K562 (cell line): ENCODE measurements at regions of chr15 and their contacts with region 1.

Region 1: GRCh38 chr15:92683232-92683834 is 27.8 kb upstream of the FAM174B start:
- DNase-seq: peak in 3 of 4 experiments; percentile 27 to 45 (median 29)
- ATAC-seq: peak; percentile 85
- H3K4me3 ChIP-seq: no peak overlapping the region
- H3K27ac ChIP-seq: no peak overlapping the region
- H3K4me1 ChIP-seq: no peaks in the 10 kb centered on the region
- H3K27me3 ChIP-seq: peaks cover 15 to 24% of the 10 kb centered on the region in 2 experiments
- CTCF ChIP-seq: peak; percentile 70 to 76 (median 72)
- EP300 ChIP-seq: no peak
- POLR2A ChIP-seq: no peak
- RAD21 ChIP-seq: peak; percentile 73 to 75

Region 2: DNA sequence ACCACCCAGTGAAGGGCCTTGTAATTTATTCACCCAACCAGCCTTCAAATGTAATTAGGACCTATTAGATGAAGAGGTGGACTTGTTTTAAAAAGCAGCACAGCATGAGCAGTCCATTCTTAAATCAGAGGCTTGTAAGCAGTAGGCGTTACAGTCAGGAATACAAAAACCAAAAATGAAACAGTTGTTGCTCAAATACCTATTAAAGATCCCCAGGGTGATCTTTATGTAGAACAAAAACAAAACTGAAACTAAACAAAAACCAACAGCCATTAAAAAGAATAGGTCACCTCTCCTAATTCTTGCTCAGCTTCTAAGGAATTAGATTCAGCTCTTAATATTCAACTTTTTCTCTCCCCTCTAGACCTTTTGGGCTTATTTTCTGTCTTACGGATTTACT is 394.6 kb before region 1 on chr15:
- CTCF ChIA-PET with region 1: no interaction called
- POLR2A ChIA-PET with region 1: no interaction called
- in situ Hi-C with region 1: no loop called
- intact Hi-C with region 1: no loop called
- DNase-seq: no peak
- ATAC-seq: no peak
- H3K4me3 ChIP-seq: no peak overlapping the region
- H3K27ac ChIP-seq: no peak overlapping the region
- H3K4me1 ChIP-seq: no peaks in the 10 kb centered on the region
- H3K27me3 ChIP-seq: no peaks in the 10 kb centered on the region
- CTCF ChIP-seq: no peak
- EP300 ChIP-seq: no peak
- POLR2A ChIP-seq: no peak
- RAD21 ChIP-seq: no peak

Region 3: DNA sequence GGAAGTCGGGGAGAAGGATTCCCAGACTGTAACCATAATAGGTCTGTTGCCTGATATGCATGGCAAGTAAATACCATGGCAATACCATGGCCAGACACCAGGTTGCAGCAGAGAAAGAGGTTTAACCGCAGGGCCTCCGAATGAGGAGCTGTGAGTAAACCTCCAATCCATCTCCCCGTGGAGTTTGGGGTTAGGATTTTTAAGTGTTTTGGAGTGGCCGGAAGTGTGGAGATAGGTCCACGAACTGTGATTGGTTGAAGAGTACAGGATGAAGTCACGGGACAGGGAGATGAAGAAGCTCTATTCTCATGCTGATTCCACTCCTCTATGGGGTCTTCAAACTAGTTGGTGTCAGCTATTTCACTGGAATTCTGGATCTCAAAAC is 161.7 kb before region 1 on chr15:
- CTCF ChIA-PET with region 1: interaction called, 13 read pairs
- POLR2A ChIA-PET with region 1: no interaction called
- in situ Hi-C with region 1: no loop called
- intact Hi-C with region 1: loop called (anchors 1 kb)
- DNase-seq: peak; percentile 44 to 58 (median 54)
- ATAC-seq: peak; percentile 95
- H3K4me3 ChIP-seq: no peak overlapping the region
- H3K27ac ChIP-seq: no peak overlapping the region
- H3K4me1 ChIP-seq: no peaks in the 10 kb centered on the region
- H3K27me3 ChIP-seq: peaks cover 0 to 12% of the 10 kb centered on the region in 2 experiments; a peak in 2 of 5 replicates
- CTCF ChIP-seq: peak; percentile 72 to 81 (median 77)
- EP300 ChIP-seq: no peak
- POLR2A ChIP-seq: no peak
- RAD21 ChIP-seq: peak; percentile 69 to 75

Region 4: DNA sequence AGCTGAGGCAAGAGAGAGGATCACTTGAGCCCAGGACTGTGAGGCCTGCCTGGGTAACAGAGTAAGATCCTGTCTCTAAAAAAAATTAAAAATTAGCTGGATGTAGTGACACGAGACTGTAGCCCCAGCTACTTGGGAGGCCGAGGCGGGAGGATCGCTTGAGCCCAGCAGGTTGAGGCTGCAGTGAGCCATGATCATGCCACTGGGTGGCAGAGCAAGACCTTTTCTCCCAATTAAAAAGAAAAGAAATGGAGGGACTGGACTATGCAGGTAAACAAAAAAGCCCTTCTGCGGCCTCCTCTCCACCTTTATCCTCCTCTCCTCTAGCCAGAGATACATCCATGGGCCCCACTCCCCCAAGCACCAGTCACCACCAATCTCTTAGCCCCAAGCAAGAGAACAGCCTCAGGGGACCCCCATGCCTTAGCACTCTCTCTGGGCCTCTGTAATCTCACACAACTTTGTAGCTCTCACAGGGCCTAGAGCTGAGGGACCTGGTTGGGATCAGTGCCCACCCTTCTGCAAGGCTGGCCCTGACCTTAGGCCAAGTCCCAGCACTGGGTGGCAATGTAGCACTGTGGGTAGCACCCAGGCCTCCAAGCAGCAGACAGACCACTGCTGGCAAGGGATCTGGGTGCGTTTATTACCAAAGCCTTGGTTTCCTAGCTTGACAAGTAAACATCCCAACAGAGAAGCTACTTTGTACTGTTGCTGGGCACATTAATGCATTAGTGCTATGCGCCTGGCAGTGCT is 71.2 kb before region 1 on chr15:
- CTCF ChIA-PET with region 1: interaction called, 3 read pairs
- POLR2A ChIA-PET with region 1: interaction called, 3 read pairs
- in situ Hi-C with region 1: no loop called
- intact Hi-C with region 1: loop called (anchors 1 kb)
- DNase-seq: no peak
- ATAC-seq: peak; percentile 22; the same call in 2 of the 3 replicates
- H3K4me3 ChIP-seq: no peak overlapping the region
- H3K27ac ChIP-seq: no peak overlapping the region
- H3K4me1 ChIP-seq: peaks cover 6 to 15% of the 10 kb centered on the region in 2 experiments; a peak in 4 of 5 replicates
- H3K27me3 ChIP-seq: peaks cover 6 to 35% of the 10 kb centered on the region in 2 experiments
- CTCF ChIP-seq: peak in 1 of 3 experiments; percentile 18; a peak in 1 of 6 replicates
- EP300 ChIP-seq: no peak
- POLR2A ChIP-seq: no peak
- RAD21 ChIP-seq: peak in 1 of 2 experiments; percentile 31; a peak in 2 of 4 replicates

Region 5: GRCh38 chr15:92631721-92632120 is 51.6 kb before region 1 on chr15:
- CTCF ChIA-PET with region 1: interaction called, 8 read pairs
- POLR2A ChIA-PET with region 1: no interaction called
- in situ Hi-C with region 1: no loop called
- intact Hi-C with region 1: loop called (anchors 1 kb)
- DNase-seq: peak; percentile 25 to 45 (median 38)
- ATAC-seq: peak; percentile 90
- H3K4me3 ChIP-seq: no peak overlapping the region
- H3K27ac ChIP-seq: no peak overlapping the region
- H3K4me1 ChIP-seq: peaks cover 0 to 8% of the 10 kb centered on the region in 2 experiments; a peak in 3 of 5 replicates
- H3K27me3 ChIP-seq: peaks cover 7 to 42% of the 10 kb centered on the region in 2 experiments; a peak in 4 of 5 replicates
- CTCF ChIP-seq: peak; percentile 50 to 56 (median 54); a peak in 5 of 6 replicates
- EP300 ChIP-seq: no peak
- POLR2A ChIP-seq: no peak
- RAD21 ChIP-seq: peak in 1 of 2 experiments; percentile 44; a peak in 2 of 4 replicates